Heart left ventricle (tissue), 16 donors: ENCODE measurements at regions of chr12 and their contacts with region 1.

Region 1: GRCh38 chr12:62799126-62799736 is 135.7 kb downstream of the PPM1H start:
- DNase-seq: peak in 4 of 5 donors; percentile 43 to 53 (median 49)
- ATAC-seq: peak; percentile 62 to 84 (median 82)
- H3K4me3 ChIP-seq: no peak overlapping the region
- H3K27ac ChIP-seq: no peak overlapping the region
- H3K4me1 ChIP-seq: peaks cover 0 to 5% (median 0%) of the 10 kb centered on the region in 12 donors
- H3K27me3 ChIP-seq: no peaks in the 10 kb centered on the region
- CTCF ChIP-seq: peak; percentile 90 to 97 (median 94)
- POLR2A ChIP-seq: no peak

Region 2: DNA sequence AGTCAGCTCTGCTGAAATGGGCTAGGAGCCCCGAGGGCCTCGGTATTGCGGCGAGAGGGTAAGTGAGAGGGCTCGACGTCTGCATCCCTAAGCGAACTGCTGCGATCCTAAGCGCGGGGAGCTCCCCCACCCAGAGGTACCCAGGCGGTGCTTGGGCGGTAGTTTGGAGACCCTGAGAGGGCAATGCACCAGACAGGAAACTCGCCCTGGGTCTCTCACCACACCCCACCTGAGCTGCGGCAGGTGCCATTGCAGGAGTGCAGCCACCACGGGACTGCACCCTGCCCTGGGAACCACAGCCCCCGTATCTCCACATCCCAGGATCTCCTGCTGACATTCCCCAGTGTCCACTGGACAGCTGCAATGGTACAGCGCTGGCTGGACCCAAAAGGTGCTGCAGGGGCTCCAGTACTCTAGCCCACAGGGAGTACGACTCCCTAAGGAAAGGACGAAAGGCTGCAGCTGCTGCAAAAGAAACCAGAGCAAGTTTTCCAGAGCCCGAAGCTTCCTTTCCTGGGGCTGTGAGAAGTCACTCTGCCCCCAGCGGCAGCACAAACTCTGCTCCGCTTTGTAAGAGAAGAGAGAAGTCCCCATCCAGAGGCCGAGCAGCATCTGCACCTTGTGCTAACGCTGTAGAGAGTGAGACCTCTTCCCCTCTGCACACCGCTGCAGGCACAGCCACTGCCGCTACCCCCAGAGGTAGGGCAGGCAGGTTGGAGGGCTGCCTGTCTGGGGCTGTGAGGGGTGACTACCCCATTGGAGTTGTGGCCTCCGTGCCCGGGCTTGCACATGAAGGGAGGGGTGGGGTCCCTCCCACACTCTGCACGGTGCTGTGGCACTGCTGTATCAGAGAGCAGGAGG is 363.7 kb before region 1 on chr12:
- intact Hi-C with region 1: loop called in 9 of 10 experiments (anchors 1 to 5 kb)
- DNase-seq: peak; percentile 38 to 71 (median 47)
- ATAC-seq: peak; percentile 33 to 89 (median 84)
- H3K4me3 ChIP-seq: peak overlapping the region in 11 of 12 donors; percentile 30 to 63 (median 51)
- H3K27ac ChIP-seq: no peak overlapping the region
- H3K4me1 ChIP-seq: peaks cover 0 to 18% (median 9%) of the 10 kb centered on the region in 12 donors
- H3K27me3 ChIP-seq: peaks cover 0 to 38% (median 16%) of the 10 kb centered on the region in 9 donors
- CTCF ChIP-seq: peak in 11 of 12 donors; percentile 25 to 64 (median 40)
- POLR2A ChIP-seq: no peak

Region 3: GRCh38 chr12:62581288-62582064 is 217.8 kb before region 1 on chr12:
- intact Hi-C with region 1: loop called (anchors 1 to 5 kb)
- DNase-seq: peak in 4 of 5 donors; percentile 10 to 56 (median 46)
- ATAC-seq: peak; percentile 81 to 94 (median 87)
- H3K4me3 ChIP-seq: no peak overlapping the region
- H3K27ac ChIP-seq: peak overlapping the region in 5 of 12 donors; percentile 4 to 55 (median 25)
- H3K4me1 ChIP-seq: peaks cover 0 to 7% (median 0%) of the 10 kb centered on the region in 12 donors
- H3K27me3 ChIP-seq: no peaks in the 10 kb centered on the region
- CTCF ChIP-seq: peak; percentile 58 to 78 (median 69)
- POLR2A ChIP-seq: no peak

Region 4: GRCh38 chr12:62631471-62632410 is 167.5 kb before region 1 on chr12:
- intact Hi-C with region 1: loop called in 3 of 10 experiments (anchors 1 to 10 kb)
- DNase-seq: peak; percentile 67 to 81 (median 76)
- ATAC-seq: peak; percentile 75 to 93 (median 88)
- H3K4me3 ChIP-seq: peak overlapping the region; percentile 48 to 73 (median 62)
- H3K27ac ChIP-seq: peak overlapping the region in 11 of 12 donors; percentile 47 to 80 (median 72)
- H3K4me1 ChIP-seq: peaks cover 0 to 23% (median 7%) of the 10 kb centered on the region in 12 donors
- H3K27me3 ChIP-seq: peaks cover 0 to 22% (median 0%) of the 10 kb centered on the region in 9 donors
- CTCF ChIP-seq: peak in 9 of 12 donors; percentile 20 to 60 (median 42)
- POLR2A ChIP-seq: peak in 1 of 2 donors; percentile 40

Region 5: GRCh38 chr12:63056649-63057048 is 257.4 kb after region 1 on chr12:
- intact Hi-C with region 1: loop called in 1 of 10 experiments (anchors 5 kb)
- DNase-seq: no peak
- ATAC-seq: no peak
- H3K4me3 ChIP-seq: no peak overlapping the region
- H3K27ac ChIP-seq: no peak overlapping the region
- H3K4me1 ChIP-seq: no peaks in the 10 kb centered on the region
- H3K27me3 ChIP-seq: no peaks in the 10 kb centered on the region
- CTCF ChIP-seq: no peak
- POLR2A ChIP-seq: no peak